Endothelial cell of umbilical vein (primary cell): ENCODE measurements at regions of chr5 and their contacts with region 1.

Region 1: DNA sequence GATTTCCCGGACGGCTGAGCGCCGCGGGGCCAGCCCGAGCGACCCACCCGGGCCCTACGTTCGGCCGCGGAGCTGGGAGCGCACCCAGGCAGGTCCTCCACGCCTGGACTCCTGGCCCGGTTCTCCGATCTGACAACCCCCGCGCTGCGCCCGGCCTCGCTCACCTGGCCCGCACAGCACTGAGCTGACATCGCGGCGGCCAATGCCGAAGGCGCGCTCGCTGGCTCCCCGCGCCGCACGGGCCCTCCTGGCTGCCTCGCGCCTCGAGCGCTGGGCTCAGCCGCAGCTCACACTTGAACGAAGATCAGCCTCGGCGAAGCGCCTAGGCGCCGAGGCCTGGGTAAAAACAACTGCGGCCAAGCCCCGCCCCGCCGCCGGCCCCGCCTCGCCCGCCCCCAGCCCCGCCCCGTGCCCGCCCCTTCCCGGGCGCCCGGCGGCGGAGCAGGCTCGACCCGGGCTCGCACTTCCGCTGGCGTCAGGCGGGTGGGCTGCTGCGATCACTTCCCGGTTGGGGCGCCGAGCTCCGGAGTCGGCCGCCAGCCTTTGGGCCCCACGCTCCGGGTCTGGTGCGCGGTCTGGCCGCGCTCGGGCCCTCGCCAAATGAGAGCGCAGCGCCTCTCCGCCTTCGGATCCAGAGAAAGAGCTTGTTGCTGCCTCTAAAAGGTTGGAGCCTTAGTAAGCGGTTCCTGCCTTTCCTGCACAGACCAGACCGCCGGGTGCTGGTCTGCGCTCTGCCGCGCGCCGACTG is at the start of gene SERINC5:
- DNase-seq: peak; percentile 79
- H3K4me3 ChIP-seq: peak within 1 kb of the TSS; percentile 64 to 85 (median 70)
- H3K27ac ChIP-seq: peak within 1 kb of the TSS; percentile 65
- H3K4me1 ChIP-seq: peaks cover 7% of the 10 kb centered on the region
- H3K27me3 ChIP-seq: no peaks in the 10 kb centered on the region
- CTCF ChIP-seq: peak in 1 of 2 donors; percentile 3
- POLR2A ChIP-seq: peak; percentile 96
- total RNA-seq, gene SERINC5: 9.9 and 10.1 TPM in 2 replicates

Region 2: GRCh38 chr5:80308526-80308925 is 52.6 kb after region 1 on chr5:
- CTCF ChIA-PET with region 1: interaction called, 15 read pairs
- POLR2A ChIA-PET with region 1: interaction called, 4 read pairs
- dilution Hi-C with region 1: no loop called
- intact Hi-C with region 1: no loop called
- DNase-seq: no peak
- H3K4me3 ChIP-seq: no peak overlapping the region
- H3K27ac ChIP-seq: no peak overlapping the region
- H3K4me1 ChIP-seq: no peaks in the 10 kb centered on the region
- H3K27me3 ChIP-seq: no peaks in the 10 kb centered on the region
- CTCF ChIP-seq: no peak
- POLR2A ChIP-seq: no peak

Region 3: DNA sequence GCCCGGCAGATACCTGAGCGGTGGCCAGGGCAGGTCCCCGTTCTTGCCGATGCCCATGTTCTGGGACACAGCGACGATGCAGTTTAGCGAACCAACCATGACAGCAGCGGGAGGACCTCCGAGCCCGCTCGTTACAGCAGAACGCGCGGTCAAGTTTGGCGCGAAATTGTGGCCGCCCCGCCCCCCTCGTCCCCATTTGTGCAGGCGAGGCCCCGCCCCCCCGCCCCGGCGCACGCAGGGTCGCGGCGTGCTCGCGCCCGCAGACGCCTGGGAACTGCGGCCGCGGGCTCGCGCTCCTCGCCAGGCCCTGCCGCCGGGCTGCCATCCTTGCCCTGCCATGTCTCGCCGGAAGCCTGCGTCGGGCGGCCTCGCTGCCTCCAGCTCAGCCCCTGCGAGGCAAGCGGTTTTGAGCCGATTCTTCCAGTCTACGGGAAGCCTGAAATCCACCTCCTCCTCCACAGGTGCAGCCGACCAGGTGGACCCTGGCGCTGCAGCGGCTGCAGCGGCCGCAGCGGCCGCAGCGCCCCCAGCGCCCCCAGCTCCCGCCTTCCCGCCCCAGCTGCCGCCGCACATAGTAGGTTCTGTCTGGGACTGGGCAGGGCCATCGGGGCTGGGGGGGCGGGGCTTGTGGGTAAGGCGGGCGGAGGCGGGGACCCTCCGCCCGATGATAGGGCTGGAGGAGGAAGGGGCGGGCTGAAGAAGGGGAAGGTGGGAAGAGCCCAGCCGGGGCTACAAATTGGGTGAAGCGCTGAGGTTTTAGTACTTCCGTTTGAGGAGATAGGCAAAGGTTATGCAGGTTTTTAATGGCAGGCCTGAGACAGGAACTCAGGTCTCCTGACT is 398.7 kb after region 1 on chr5 and contains the starts of genes DHFR and MSH3:
- CTCF ChIA-PET with region 1: no interaction called
- POLR2A ChIA-PET with region 1: no interaction called
- dilution Hi-C with region 1: no loop called
- intact Hi-C with region 1: loop called (anchors 5 kb)
- DNase-seq: peak; percentile 88
- H3K4me3 ChIP-seq: peak within 1 kb of the TSS; percentile 76 to 93 (median 81)
- H3K27ac ChIP-seq: peak within 1 kb of the TSS; percentile 79
- H3K4me1 ChIP-seq: peaks cover 20% of the 10 kb centered on the region
- H3K27me3 ChIP-seq: no peaks in the 10 kb centered on the region
- CTCF ChIP-seq: peak; percentile 5 to 18
- POLR2A ChIP-seq: peak; percentile 80
- total RNA-seq, gene DHFR: 32.8 and 35.8 TPM in 2 replicates
- total RNA-seq, gene MSH3: 10.5 and 13.0 TPM in 2 replicates